Heart left ventricle (tissue), 16 donors: ENCODE measurements at regions of chr1 and their contacts with region 1.

Region 1: GRCh38 chr1:46757241-46757959 is 38.5 kb upstream of the EFCAB14 start:
- DNase-seq: no peak
- ATAC-seq: no peak
- H3K4me3 ChIP-seq: no peak overlapping the region
- H3K27ac ChIP-seq: no peak overlapping the region
- H3K4me1 ChIP-seq: no peaks in the 10 kb centered on the region
- H3K27me3 ChIP-seq: peaks cover 0 to 6% (median 0%) of the 10 kb centered on the region in 9 donors
- CTCF ChIP-seq: no peak
- POLR2A ChIP-seq: no peak

Region 2: DNA sequence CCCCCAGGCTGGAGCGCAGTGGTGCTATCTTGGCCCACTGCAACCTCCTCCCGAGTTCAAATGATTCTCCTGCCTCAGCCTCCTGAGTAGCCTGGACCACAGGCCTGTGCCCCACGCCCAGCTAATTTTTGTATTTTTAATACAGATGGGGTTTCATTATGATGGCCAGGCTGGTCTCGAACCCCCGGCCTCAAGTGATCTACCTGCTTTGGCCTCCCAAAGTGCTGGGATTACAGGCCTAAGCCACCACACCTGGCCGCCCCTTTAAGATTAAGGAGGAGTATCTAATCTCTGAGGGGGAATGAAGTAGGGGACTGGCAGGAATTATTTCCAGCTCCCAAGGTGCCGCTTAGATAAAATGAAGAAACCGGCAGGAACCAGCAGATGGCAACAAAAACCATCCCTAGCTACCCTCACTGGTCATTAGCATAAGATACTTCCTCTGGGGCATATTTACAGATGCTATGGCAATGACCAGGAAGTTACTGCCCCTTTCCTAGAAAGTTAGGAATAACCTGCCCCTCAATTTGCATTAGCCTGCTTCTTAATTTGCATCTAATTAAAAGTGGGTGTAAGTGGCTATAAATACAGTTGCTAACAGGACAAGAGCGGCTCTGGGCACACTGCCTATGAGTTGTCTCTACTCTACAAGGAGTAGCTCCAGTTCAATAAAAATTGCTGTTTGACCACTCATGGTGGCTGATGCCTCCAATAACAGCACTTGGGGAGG is 423.9 kb before region 1 on chr1:
- intact Hi-C with region 1: no loop called
- DNase-seq: no peak
- ATAC-seq: peak in 1 of 4 donors; percentile 34
- H3K4me3 ChIP-seq: no peak overlapping the region
- H3K27ac ChIP-seq: no peak overlapping the region
- H3K4me1 ChIP-seq: no peaks in the 10 kb centered on the region
- H3K27me3 ChIP-seq: no peaks in the 10 kb centered on the region
- CTCF ChIP-seq: peak in 2 of 12 donors; percentile 11 to 13
- POLR2A ChIP-seq: no peak

Region 3: DNA sequence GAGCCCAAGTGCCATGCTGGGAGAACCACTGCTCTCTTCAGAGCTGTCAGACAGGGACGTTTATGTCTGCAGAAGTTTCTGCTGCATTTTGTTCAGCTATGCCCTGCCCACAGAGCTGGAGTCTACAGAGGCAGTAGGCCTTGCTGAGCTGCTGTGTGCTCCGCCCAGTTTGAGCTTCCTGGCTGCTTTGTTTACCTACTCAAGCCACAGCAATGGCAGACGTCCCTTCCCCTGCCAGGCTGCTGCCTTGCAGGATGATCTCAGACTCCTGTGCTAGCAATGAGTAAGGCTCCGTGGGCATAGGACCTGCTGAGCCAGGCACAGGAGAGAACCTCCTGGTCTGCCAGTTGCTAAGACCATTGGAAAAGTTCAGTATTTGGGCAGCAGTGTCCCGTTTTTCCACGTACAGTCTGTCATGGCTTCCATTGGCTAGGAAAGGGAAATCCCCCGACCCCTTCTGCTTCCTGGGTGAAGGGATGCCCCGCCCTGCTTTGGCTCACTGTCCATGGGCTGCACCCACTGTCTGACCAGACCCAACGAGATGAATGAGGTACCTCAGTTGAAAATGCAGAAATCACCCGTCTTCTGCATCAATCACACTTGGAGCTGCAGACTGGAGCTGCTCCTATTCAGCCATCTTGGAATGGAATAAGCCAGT is 73.4 kb after region 1 on chr1:
- intact Hi-C with region 1: no loop called
- DNase-seq: no peak
- ATAC-seq: no peak
- H3K4me3 ChIP-seq: no peak overlapping the region
- H3K27ac ChIP-seq: no peak overlapping the region
- H3K4me1 ChIP-seq: no peaks in the 10 kb centered on the region
- H3K27me3 ChIP-seq: no peaks in the 10 kb centered on the region
- CTCF ChIP-seq: no peak
- POLR2A ChIP-seq: no peak

Region 4: DNA sequence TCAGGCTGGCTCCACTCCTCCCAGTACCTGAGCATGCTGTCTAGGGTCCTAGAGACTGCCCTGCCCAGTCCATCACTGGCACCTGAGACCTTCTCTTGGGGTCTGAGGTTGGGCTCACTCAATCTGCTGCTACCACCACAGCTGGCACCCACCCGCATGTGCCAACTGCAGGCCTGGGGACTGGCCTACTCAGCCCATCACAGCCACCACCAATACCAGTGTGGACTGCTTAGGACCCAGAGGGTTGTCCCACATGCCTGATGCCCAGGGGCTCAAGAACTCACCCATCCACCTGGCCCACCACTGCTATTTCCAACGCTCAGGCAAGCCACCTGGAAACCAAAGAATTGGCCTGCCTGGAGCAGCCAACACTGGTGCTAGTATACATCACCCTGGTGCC is 104.9 kb after region 1 on chr1:
- intact Hi-C with region 1: loop called in 1 of 10 experiments (anchors 10 kb)
- DNase-seq: no peak
- ATAC-seq: no peak
- H3K4me3 ChIP-seq: no peak overlapping the region
- H3K27ac ChIP-seq: no peak overlapping the region
- H3K4me1 ChIP-seq: no peaks in the 10 kb centered on the region
- H3K27me3 ChIP-seq: no peaks in the 10 kb centered on the region
- CTCF ChIP-seq: no peak
- POLR2A ChIP-seq: no peak

Region 5: DNA sequence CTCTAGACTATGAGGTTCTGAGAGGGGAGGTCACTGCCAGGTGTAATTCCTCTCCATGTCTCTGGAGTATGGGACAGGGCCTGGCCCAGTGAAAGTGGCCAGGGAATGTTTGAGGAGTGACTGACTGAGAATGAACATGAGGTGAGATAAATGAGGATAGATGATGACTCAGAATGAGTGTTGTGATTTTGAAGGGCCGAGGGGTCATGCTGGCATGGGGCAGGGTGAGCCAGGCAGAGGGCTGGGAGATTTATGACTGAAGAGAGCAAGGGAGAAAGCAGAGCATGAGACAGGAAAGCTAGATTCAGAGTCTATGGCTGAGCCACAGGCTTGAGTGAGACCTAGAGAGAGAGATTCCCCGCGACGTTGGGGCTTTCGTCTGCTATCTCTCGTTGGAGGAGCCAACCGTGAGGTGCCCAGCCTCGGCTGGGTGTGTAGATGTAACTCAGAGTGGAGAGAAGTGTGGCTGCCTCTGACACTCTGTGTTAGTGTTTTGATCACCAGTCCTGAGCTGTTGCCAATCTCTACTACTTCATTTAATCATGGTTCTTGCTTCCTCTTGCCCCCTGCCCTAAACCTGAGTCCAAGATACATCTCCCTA is 730.5 kb after region 1 on chr1:
- intact Hi-C with region 1: no loop called
- DNase-seq: no peak
- ATAC-seq: no peak
- H3K4me3 ChIP-seq: no peak overlapping the region
- H3K27ac ChIP-seq: no peak overlapping the region
- H3K4me1 ChIP-seq: peaks cover 0 to 8% (median 0%) of the 10 kb centered on the region in 12 donors
- H3K27me3 ChIP-seq: peaks cover 0 to 24% (median 3%) of the 10 kb centered on the region in 9 donors
- CTCF ChIP-seq: no peak
- POLR2A ChIP-seq: no peak